Sigmoid colon (tissue), 7 donors: ENCODE measurements at regions of chr17 and their contacts with region 1.

Region 1: GRCh38 chr17:1047177-1047878 is 50.4 kb downstream of the TIMM22 start:
- DNase-seq: peak; percentile 87
- H3K4me3 ChIP-seq: no peak overlapping the region
- H3K27ac ChIP-seq: peak overlapping the region; percentile 80 to 88 (median 84)
- H3K4me1 ChIP-seq: peaks cover 3 to 52% (median 41%) of the 10 kb centered on the region in 4 donors
- H3K27me3 ChIP-seq: no peaks in the 10 kb centered on the region
- CTCF ChIP-seq: peak; percentile 12 to 72 (median 38)
- EP300 ChIP-seq: peak in 2 of 4 donors; percentile 42 to 74
- POLR2A ChIP-seq: no peak

Region 2: GRCh38 chr17:640436-640835 is 406.9 kb before region 1 on chr17:
- intact Hi-C with region 1: no loop called
- DNase-seq: no peak
- H3K4me3 ChIP-seq: no peak overlapping the region
- H3K27ac ChIP-seq: no peak overlapping the region
- H3K4me1 ChIP-seq: no peaks in the 10 kb centered on the region
- H3K27me3 ChIP-seq: no peaks in the 10 kb centered on the region
- CTCF ChIP-seq: no peak
- EP300 ChIP-seq: no peak
- POLR2A ChIP-seq: no peak

Region 3: DNA sequence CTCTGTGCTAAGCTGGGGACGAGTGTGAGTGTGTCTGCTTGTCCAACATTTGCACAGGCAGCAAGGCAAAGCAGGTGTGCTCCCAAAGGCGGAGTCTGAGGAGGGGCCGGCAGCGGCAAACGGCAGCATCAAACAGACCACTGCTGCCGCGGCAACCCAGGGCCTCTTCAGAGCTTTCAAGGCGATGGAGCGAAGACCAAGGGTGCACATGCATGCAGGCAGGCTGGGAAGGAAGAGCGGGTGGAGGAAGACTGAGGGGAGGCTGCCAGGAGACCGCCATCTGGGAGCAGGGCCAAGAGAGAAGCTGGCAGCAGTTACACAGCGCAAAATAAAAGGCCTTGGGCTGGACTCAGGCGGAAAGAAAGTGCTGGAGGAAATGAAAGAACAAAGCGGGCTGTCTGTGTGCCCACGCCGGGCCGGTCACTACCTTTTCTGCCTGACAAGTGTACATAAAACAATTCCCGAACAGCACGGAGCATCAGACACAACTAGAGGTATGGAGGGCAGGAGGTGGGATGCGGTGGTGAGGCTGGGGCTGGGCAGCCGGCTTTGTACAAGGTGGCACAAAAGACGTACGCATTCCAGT is 41.9 kb before region 1 on chr17:
- intact Hi-C with region 1: loop called (anchors 2 kb)
- DNase-seq: peak; percentile 91
- H3K4me3 ChIP-seq: peak overlapping the region in 3 of 4 donors; percentile 10 to 29 (median 18)
- H3K27ac ChIP-seq: peak overlapping the region; percentile 74 to 85 (median 80)
- H3K4me1 ChIP-seq: peaks cover 0 to 70% (median 60%) of the 10 kb centered on the region in 4 donors
- H3K27me3 ChIP-seq: no peaks in the 10 kb centered on the region
- CTCF ChIP-seq: no peak
- EP300 ChIP-seq: no peak
- POLR2A ChIP-seq: no peak

Region 4: DNA sequence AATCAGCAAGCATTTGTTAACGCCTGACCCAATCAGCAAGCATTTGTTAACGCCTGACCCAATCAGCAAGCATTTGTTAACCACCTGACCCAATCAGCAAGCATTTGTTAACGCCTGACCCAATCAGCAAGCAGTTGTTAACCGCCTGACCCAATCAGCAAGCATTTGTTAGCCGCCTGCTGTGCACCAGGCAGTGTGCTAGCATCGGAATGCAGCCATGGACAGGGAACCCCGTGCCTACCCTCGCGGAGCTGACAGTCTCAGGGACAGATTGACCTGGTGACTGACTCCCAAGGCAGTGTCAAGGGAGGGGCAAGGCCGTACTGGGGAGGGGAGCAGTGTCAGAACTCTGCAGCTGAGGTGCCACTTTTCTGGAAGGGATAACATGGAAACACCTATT is 65.5 kb after region 1 on chr17:
- intact Hi-C with region 1: no loop called
- DNase-seq: no peak
- H3K4me3 ChIP-seq: no peak overlapping the region
- H3K27ac ChIP-seq: no peak overlapping the region
- H3K4me1 ChIP-seq: peaks cover 0 to 52% (median 47%) of the 10 kb centered on the region in 4 donors
- H3K27me3 ChIP-seq: no peaks in the 10 kb centered on the region
- CTCF ChIP-seq: no peak
- EP300 ChIP-seq: no peak
- POLR2A ChIP-seq: no peak